ENCODE measurements at regions of chr16 and their contacts with region 1.

Region 1: GRCh38 chr16:9053006-9053601 is 38.3 kb upstream of the HAPSTR1 start:
- DNase-seq: peak; percentile 51 to 78
- ATAC-seq: peak; percentile 84 to 89 (median 84)
- H3K4me3 ChIP-seq: peak overlapping the region; percentile 49
- H3K27ac ChIP-seq: peak overlapping the region; percentile 70
- H3K4me1 ChIP-seq: peaks cover 18% of the 10 kb centered on the region
- H3K27me3 ChIP-seq: peaks cover 0 to 3% (median 0%) of the 10 kb centered on the region in 3 donors
- CTCF ChIP-seq: no peak

Region 2: DNA sequence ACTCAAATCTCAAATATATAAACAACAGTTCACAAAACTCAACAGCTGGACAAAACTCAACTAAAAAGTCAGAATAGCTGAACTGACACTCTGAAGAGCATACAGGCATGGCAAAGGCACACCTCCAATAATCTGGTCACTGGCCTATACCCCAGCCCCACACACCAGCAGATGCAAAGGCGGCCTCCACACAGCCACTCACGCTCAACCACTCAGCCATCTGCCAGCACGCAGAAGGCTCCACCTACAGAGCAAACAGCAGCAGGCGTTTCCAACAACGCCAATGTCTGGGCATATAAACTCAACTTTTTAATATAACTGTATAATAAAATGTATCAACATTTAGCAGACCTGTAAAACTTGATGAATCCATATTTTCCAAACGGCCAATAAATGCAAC is 106.6 kb before region 1 on chr16:
- intact Hi-C with region 1: no loop called
- DNase-seq: no peak
- ATAC-seq: no peak
- H3K4me3 ChIP-seq: no peak overlapping the region
- H3K27ac ChIP-seq: no peak overlapping the region
- H3K4me1 ChIP-seq: peaks cover 94% of the 10 kb centered on the region
- H3K27me3 ChIP-seq: no peaks in the 10 kb centered on the region
- CTCF ChIP-seq: no peak

Region 3: GRCh38 chr16:8963825-8964441 is 89.2 kb before region 1 on chr16 and contains the start of gene USP7:
- intact Hi-C with region 1: loop called in 1 of 2 experiments (anchors 5 kb)
- DNase-seq: peak; percentile 94 to 97
- ATAC-seq: peak; percentile 93 to 95 (median 94)
- H3K4me3 ChIP-seq: peak within 1 kb of the TSS; percentile 81
- H3K27ac ChIP-seq: peak within 1 kb of the TSS; percentile 87
- H3K4me1 ChIP-seq: peaks cover 34% of the 10 kb centered on the region
- H3K27me3 ChIP-seq: no peaks in the 10 kb centered on the region
- CTCF ChIP-seq: no peak
- total RNA-seq, gene USP7: 87.5 to 135 (median 120) TPM

Region 4: DNA sequence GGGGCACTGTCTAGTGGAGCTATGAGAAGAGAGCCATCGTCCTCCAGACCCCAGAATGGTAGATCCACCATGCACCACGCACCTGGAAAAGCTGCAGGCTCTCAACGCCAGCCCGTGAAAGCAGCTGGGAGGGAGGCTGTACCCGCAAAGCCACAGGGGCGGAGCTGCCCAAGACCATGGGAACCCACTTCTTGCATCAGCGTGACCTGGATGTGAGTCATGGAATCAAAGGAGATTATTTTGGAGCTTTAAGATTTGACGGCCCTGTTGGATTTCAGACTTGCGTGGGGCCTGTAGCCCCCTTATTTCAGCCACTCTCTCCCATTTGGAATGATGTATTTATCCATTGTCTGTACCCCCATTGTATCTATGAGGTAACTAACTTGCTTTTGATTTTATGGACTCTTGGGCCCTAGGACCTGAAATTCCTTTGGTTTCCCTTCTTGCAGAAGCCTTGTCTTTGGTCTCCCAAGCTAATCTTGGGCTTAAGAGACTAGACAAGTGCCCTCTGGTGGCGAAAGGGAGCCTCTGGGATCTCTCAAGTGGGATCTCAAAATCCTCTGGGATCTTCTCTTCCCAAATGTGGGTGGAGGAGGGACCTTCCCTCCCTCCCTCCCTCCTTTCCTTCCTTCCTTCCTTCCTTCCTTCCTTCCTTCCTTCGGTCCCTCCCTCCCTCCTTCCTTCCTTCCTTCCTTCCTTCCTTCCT is 19.8 kb before region 1 on chr16:
- intact Hi-C with region 1: no loop called
- DNase-seq: no peak
- ATAC-seq: no peak
- H3K4me3 ChIP-seq: no peak overlapping the region
- H3K27ac ChIP-seq: no peak overlapping the region
- H3K4me1 ChIP-seq: no peaks in the 10 kb centered on the region
- H3K27me3 ChIP-seq: no peaks in the 10 kb centered on the region
- CTCF ChIP-seq: peak; percentile 38